ENCODE measurements at regions of chr2 and their contacts with region 1.

Region 1: DNA sequence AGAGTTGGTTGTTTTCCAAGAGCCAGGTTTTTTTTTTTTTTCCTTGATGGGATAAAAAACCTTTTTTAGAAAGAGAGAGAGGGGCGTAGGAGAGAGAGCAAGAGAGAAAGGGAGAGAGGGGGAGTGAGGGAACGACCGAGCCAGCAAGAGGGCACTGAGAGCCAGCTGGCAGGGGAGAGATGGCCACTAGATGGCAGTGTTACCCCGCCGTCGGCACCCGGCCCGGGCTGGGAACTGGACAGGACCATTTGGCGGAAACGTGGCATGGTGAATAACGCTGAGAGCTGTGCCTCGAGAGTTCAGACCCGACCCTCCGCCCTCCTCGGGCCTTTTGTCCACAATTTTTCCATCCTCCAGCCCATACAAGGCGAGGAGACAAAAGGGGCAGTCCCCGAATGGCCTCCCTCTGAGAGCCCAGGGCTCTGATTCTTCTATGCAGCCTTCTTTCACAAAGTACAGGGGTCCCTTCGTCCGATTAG is 286.7 kb upstream of the VRK2 start:
- DNase-seq: peak; percentile 48
- ATAC-seq: peak; percentile 97
- H3K4me3 ChIP-seq: peak overlapping the region; percentile 58; the same call in 1 of the 2 replicates
- H3K27ac ChIP-seq: peak overlapping the region; percentile 73
- H3K4me1 ChIP-seq: peaks cover 24% of the 10 kb centered on the region; the same call in 1 of the 2 replicates
- H3K27me3 ChIP-seq: no peaks in the 10 kb centered on the region
- CTCF ChIP-seq: peak; percentile 90 to 93 (median 91)
- EP300 ChIP-seq: no peak
- POLR2A ChIP-seq: no peak
- RAD21 ChIP-seq: peak; percentile 93

Region 2: DNA sequence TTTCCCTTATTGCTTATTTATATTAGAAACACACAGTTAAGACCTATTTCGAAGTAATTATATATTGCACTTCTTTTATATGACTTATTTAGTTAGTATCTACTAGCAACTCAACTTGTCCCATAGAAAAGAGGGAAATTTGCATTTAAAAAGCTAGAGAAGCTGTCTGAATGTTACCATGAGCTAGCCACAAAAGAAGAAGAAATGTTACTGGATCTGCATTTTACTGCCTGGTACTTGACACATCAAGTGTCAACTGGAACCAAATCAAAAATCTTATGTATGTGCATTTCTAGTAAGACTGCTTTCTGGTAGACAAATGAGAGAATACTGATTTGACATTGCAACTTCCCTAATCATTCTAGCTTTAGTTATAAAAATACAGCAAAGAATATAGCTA is 137.9 kb before region 1 on chr2:
- CTCF ChIA-PET with region 1: no interaction called
- POLR2A ChIA-PET with region 1: no interaction called
- RAD21 ChIA-PET with region 1: no interaction called
- SMC1A ChIA-PET with region 1: no interaction called
- in situ Hi-C with region 1: no loop called
- intact Hi-C with region 1: no loop called
- DNase-seq: no peak
- ATAC-seq: no peak; the same call in 2 of the 3 replicates
- H3K4me3 ChIP-seq: no peak overlapping the region
- H3K27ac ChIP-seq: no peak overlapping the region
- H3K4me1 ChIP-seq: no peaks in the 10 kb centered on the region
- H3K27me3 ChIP-seq: no peaks in the 10 kb centered on the region
- CTCF ChIP-seq: no peak
- EP300 ChIP-seq: no peak
- POLR2A ChIP-seq: no peak
- RAD21 ChIP-seq: no peak

Region 3: DNA sequence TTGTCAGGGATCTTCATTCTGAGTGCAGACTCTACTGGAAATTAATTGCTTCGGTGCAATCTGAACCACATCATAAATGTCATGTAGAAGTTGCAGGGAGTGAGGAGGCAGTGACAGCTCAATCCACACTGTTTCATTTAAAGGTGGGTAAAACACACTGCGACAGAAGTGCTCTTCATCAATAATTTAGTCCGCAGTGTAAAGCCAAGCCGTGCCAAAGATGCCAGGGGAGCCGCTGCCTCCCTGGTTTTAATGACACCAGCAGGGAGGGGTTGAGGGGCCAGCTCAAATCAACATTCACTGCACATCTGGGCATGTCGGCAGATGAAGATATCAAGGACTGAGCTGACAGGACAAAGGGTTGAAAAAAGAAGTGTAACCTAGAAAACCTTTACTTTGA is 19.0 kb before region 1 on chr2:
- CTCF ChIA-PET with region 1: interaction called, 5 read pairs
- POLR2A ChIA-PET with region 1: interaction called, 4 read pairs
- RAD21 ChIA-PET with region 1: interaction called, 3 read pairs
- SMC1A ChIA-PET with region 1: interaction called, 15 read pairs
- in situ Hi-C with region 1: no loop called
- intact Hi-C with region 1: no loop called
- DNase-seq: no peak
- ATAC-seq: no peak
- H3K4me3 ChIP-seq: no peak overlapping the region
- H3K27ac ChIP-seq: no peak overlapping the region
- H3K4me1 ChIP-seq: no peaks in the 10 kb centered on the region
- H3K27me3 ChIP-seq: no peaks in the 10 kb centered on the region; a peak in 1 of 4 replicates
- CTCF ChIP-seq: no peak
- EP300 ChIP-seq: no peak
- POLR2A ChIP-seq: no peak
- RAD21 ChIP-seq: no peak

Region 4: GRCh38 chr2:57881998-57882884 is 122.4 kb after region 1 on chr2:
- CTCF ChIA-PET with region 1: interaction called, 39 read pairs
- POLR2A ChIA-PET with region 1: no interaction called
- RAD21 ChIA-PET with region 1: interaction called, 17 read pairs
- SMC1A ChIA-PET with region 1: interaction called, 25 read pairs
- in situ Hi-C with region 1: no loop called
- intact Hi-C with region 1: loop called (anchors 1 kb)
- DNase-seq: no peak
- ATAC-seq: peak; percentile 11
- H3K4me3 ChIP-seq: peak overlapping the region; percentile 47; the same call in 1 of the 2 replicates
- H3K27ac ChIP-seq: peak overlapping the region; percentile 74
- H3K4me1 ChIP-seq: peaks cover 39% of the 10 kb centered on the region
- H3K27me3 ChIP-seq: no peaks in the 10 kb centered on the region
- CTCF ChIP-seq: no peak
- EP300 ChIP-seq: no peak
- POLR2A ChIP-seq: no peak
- RAD21 ChIP-seq: no peak

Region 5: GRCh38 chr2:58146707-58147106 is 386.8 kb after region 1 on chr2:
- CTCF ChIA-PET with region 1: interaction called, 3 read pairs
- POLR2A ChIA-PET with region 1: no interaction called
- RAD21 ChIA-PET with region 1: interaction called, 3 read pairs
- SMC1A ChIA-PET with region 1: interaction called, 4 read pairs
- in situ Hi-C with region 1: no loop called
- intact Hi-C with region 1: loop called (anchors 5 kb)
- DNase-seq: no peak
- ATAC-seq: peak; percentile 36; the same call in 1 of the 3 replicates
- H3K4me3 ChIP-seq: no peak overlapping the region
- H3K27ac ChIP-seq: no peak overlapping the region
- H3K4me1 ChIP-seq: no peaks in the 10 kb centered on the region
- H3K27me3 ChIP-seq: no peaks in the 10 kb centered on the region
- CTCF ChIP-seq: no peak
- EP300 ChIP-seq: no peak
- POLR2A ChIP-seq: no peak
- RAD21 ChIP-seq: no peak

Region 6: DNA sequence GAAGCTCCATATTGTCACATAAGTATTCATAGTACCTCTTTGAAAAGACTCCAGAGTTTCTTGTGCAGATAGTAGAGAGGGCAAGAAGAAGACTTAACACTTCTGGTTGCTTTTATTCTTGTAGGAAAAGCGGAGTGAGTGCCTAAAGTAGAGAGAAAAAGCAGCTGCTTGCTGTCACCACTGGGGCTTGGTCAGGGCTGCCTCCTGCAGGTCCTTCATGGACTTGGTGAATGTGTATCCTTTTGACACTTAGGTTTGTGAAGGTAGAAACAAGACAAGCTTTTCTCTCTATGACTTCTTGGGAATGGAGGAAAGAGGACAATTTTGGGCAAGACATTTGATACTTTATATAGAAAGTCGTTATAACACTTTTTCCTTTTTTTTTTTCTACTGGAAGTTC is 794.1 kb after region 1 on chr2:
- CTCF ChIA-PET with region 1: interaction called, 4 read pairs
- POLR2A ChIA-PET with region 1: no interaction called
- RAD21 ChIA-PET with region 1: interaction called, 3 read pairs
- SMC1A ChIA-PET with region 1: interaction called, 4 read pairs
- in situ Hi-C with region 1: no loop called
- intact Hi-C with region 1: loop called (anchors 1 kb)
- DNase-seq: no peak
- ATAC-seq: peak; percentile 59; the same call in 2 of the 3 replicates
- H3K4me3 ChIP-seq: no peak overlapping the region
- H3K27ac ChIP-seq: no peak overlapping the region
- H3K4me1 ChIP-seq: no peaks in the 10 kb centered on the region
- H3K27me3 ChIP-seq: peaks cover 0 to 7% of the 10 kb centered on the region in 2 experiments; a peak in 1 of 4 replicates
- CTCF ChIP-seq: peak; percentile 22 to 46 (median 25); a peak in 3 of 6 replicates
- EP300 ChIP-seq: no peak
- POLR2A ChIP-seq: no peak
- RAD21 ChIP-seq: peak; percentile 59